ENCODE measurements at regions of chr3 and their contacts with region 1.

Region 1: DNA sequence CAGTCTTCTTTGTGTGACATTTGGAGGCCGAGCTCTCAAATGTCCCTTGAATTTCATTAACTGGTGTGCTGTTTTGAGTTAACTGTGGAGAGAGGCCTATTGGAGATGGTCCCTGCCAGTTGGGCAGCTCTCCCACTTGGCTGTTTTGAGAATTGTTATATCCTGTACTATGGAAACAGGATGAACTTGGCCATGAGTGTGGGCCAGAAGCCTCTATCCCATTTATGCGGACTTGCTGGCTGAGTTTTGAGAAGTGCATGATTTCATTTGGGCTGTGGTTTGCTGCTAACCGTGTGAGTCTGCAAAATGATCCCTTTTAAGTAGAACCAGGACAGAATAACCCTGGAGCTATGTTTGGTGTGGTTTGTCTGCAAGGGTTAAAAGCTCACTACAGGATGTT is 366.0 kb downstream of the PTPRG start:
- DNase-seq: peak; percentile 95

Region 2: DNA sequence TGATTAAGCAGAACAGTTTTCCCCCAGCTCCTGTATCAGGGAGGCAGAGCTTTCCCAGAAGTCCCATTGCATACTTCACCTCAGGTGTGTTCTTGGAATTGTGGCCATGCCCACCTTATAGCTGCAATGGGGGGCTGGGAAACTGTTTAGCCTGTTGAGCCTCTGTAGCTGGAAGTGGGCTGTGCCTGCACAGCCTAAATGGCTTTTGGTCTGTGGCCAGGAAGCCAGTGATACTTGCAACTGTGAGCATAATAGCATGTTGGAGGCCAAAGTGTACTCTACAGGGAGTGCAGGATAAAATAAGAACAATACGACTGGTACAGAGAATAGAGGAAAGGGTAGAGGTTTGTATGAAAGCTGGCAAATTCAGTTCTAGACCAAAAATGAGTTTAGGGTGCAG is 117.5 kb before region 1 on chr3:
- intact Hi-C with region 1: loop called in 1 of 2 experiments (anchors 5 kb)
- DNase-seq: no peak

Region 3: DNA sequence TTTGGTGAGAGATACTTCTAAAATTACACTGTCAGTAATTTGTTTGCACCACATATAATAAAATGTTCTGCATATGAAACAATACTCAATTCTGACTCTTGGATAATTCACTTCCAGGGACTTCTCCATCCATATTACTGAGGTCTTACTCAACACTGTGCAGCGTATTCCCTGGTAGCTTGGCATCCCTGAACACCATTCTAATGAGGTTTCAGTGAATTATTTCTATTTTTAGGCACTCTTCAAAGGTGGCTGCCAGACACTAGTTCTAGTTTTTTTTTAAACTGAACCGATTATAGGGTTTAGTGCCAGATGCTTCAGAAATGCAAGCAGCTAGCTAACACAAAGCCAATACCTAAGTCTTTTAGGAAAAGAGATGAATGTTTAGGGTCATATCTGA is 162.7 kb after region 1 on chr3:
- intact Hi-C with region 1: no loop called
- DNase-seq: no peak